ENCODE measurements at regions of chr1 and their contacts with region 1.

Region 1: DNA sequence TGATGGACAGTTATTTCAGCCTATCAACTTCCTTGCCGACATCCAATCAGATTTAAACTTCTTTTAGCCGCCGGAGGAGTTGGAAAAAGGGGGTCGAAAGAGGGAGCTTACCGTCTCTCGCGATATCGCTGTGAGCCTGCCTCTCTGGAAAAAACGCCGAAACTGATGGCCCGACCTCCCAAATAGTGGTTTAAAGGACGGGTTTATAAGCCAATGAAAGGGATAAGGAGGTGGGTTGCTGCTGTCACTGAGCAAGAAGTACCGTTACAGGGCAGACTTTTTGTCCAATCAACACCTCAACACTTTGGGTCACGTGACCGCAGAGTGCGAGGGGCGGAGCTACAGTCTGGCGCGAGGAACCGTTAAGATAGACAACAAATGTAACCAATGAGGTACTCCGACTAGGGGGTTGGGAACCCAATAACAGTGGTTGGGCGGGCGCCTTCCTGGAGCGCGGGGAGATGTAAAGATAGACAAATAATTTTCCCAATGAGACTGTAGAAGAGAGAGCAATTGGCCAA is at the start of gene RBM15:
- DNase-seq: peak; percentile 98
- H3K4me3 Mint-ChIP-seq: no peak within 1 kb of the TSS
- H3K27ac Mint-ChIP-seq: no peak within 1 kb of the TSS
- H3K4me1 Mint-ChIP-seq: peaks cover 57% of the 10 kb centered on the region
- H3K27me3 Mint-ChIP-seq: no peaks in the 10 kb centered on the region
- total RNA-seq, gene RBM15: 59.1 to 60.2 TPM

Region 2: DNA sequence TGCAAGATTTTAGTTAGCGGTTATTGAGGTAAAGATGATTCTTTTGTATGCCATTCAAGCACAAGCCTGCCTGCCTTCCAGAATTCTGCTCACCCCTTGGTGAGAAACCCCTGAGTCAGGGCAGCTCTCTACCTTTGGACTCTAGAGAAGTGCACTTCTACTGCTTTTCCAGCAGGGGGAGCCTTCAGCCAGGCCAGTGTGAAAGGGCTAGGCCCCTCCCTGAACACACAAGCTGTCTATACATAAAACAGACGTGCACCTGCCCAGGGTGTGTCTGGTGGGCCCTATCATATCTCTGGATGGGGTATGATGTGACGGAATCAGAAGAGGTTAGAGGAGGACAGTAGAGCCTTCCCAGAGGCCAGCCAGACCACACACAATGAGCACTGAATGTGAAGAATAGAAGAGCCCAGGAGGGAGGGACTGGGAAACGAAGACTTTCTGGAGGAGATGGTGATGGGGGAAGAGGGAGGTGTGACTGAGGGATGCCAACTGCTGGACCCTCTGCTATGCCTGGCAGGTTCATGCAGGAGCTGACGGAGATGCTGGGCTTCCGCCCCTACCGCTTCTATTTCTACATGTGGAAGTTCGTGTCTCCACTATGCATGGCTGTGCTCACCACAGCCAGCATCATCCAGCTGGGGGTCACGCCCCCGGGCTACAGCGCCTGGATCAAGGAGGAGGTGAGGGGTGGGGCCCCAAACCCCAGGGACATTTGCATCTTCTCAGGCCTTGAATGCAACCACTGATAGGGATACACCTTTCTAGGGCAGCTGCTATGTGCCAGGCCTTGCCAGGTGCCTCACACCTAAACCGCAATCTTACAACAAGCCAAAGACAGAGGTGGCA is 141.8 kb before region 1 on chr1:
- CTCF ChIA-PET with region 1: interaction called, 19 read pairs
- POLR2A ChIA-PET with region 1: interaction called, 3 read pairs
- intact Hi-C with region 1: loop called (anchors 2 kb)
- DNase-seq: peak; percentile 63
- H3K4me3 Mint-ChIP-seq: no peak overlapping the region
- H3K27ac Mint-ChIP-seq: no peak overlapping the region
- H3K4me1 Mint-ChIP-seq: no peaks in the 10 kb centered on the region
- H3K27me3 Mint-ChIP-seq: no peaks in the 10 kb centered on the region

Region 3: GRCh38 chr1:110235834-110236682 is 102.9 kb before region 1 on chr1:
- CTCF ChIA-PET with region 1: interaction called, 3 read pairs
- POLR2A ChIA-PET with region 1: interaction called, 3 read pairs
- intact Hi-C with region 1: loop called (anchors 1 kb)
- DNase-seq: peak; percentile 86
- H3K4me3 Mint-ChIP-seq: peak overlapping the region; percentile 22
- H3K27ac Mint-ChIP-seq: peak overlapping the region; percentile 97
- H3K4me1 Mint-ChIP-seq: peaks cover 56% of the 10 kb centered on the region
- H3K27me3 Mint-ChIP-seq: no peaks in the 10 kb centered on the region

Region 4: GRCh38 chr1:110390692-110391245 is 51.8 kb after region 1 on chr1 and contains the start of gene SLC16A4:
- CTCF ChIA-PET with region 1: no interaction called
- POLR2A ChIA-PET with region 1: no interaction called
- intact Hi-C with region 1: no loop called
- DNase-seq: no peak
- H3K4me3 Mint-ChIP-seq: no peak within 1 kb of the TSS
- H3K27ac Mint-ChIP-seq: no peak within 1 kb of the TSS
- H3K4me1 Mint-ChIP-seq: peaks cover 6% of the 10 kb centered on the region
- H3K27me3 Mint-ChIP-seq: no peaks in the 10 kb centered on the region
- total RNA-seq, gene SLC16A4: 0.19 to 0.48 TPM

Region 5: GRCh38 chr1:110523011-110523410 is 184.1 kb after region 1 on chr1:
- CTCF ChIA-PET with region 1: no interaction called
- POLR2A ChIA-PET with region 1: no interaction called
- intact Hi-C with region 1: no loop called
- DNase-seq: no peak
- H3K4me3 Mint-ChIP-seq: no peak overlapping the region
- H3K27ac Mint-ChIP-seq: no peak overlapping the region
- H3K4me1 Mint-ChIP-seq: peaks cover 5% of the 10 kb centered on the region
- H3K27me3 Mint-ChIP-seq: peaks cover 15% of the 10 kb centered on the region

Region 6: DNA sequence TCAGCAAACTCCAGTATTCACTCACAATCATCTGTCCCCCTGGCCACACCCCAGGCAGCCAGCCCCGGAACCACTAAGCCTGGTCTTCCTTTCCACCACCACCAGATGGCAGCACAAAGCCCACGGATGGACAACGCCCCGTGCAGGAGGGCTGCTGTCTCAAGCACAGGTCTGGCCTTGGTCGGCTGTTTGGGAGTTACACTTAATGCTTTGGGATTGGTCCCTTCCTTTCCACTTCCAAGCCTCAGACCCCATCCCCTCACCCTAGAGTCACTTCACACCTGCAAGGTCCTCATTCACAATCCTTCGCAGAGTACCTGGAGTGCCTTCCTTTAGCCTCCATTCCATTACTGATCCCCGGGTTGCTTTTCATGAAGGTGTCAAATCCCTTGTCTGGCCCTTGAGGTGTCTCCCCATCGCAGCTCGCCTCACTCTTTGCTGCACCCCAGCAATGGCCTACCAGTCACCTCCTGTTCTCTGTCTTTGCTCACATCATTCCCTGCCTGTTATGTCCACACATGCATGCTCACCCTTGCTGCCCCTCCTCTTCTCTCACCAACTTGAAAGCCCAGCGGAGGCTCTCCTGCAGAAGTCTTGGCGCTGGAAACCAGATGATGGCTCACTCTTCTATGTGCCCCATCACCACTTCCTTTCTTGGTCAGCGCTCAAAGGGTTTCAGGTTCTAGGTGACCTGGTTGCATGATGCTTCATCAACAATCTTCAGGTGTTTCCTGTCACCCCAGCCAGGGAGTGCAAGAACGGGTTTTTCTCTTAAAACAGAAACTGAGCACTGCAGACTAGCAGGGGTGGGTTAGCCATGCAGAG is 292.1 kb after region 1 on chr1:
- CTCF ChIA-PET with region 1: no interaction called
- POLR2A ChIA-PET with region 1: no interaction called
- intact Hi-C with region 1: loop called (anchors 2 kb)
- DNase-seq: peak; percentile 92
- H3K4me3 Mint-ChIP-seq: no peak overlapping the region
- H3K27ac Mint-ChIP-seq: no peak overlapping the region
- H3K4me1 Mint-ChIP-seq: peaks cover 66% of the 10 kb centered on the region
- H3K27me3 Mint-ChIP-seq: no peaks in the 10 kb centered on the region

Region 7: GRCh38 chr1:110963691-110964399 is 624.9 kb after region 1 on chr1 and contains the start of gene LRIF1:
- CTCF ChIA-PET with region 1: no interaction called
- POLR2A ChIA-PET with region 1: no interaction called
- intact Hi-C with region 1: loop called (anchors 1 kb)
- DNase-seq: peak; percentile 100
- H3K4me3 Mint-ChIP-seq: peak within 1 kb of the TSS; percentile 84
- H3K27ac Mint-ChIP-seq: peak within 1 kb of the TSS; percentile 96
- H3K4me1 Mint-ChIP-seq: peaks cover 32% of the 10 kb centered on the region
- H3K27me3 Mint-ChIP-seq: peaks cover 9% of the 10 kb centered on the region
- total RNA-seq, gene LRIF1: 12.9 to 14.4 TPM